Activated naive CD4-positive, alpha-beta T cell treated with anti-CD3 and anti-CD28 coated beads for 36 hours (primary cell): ENCODE measurements at regions of chr10 and their contacts with region 1.

Region 1: DNA sequence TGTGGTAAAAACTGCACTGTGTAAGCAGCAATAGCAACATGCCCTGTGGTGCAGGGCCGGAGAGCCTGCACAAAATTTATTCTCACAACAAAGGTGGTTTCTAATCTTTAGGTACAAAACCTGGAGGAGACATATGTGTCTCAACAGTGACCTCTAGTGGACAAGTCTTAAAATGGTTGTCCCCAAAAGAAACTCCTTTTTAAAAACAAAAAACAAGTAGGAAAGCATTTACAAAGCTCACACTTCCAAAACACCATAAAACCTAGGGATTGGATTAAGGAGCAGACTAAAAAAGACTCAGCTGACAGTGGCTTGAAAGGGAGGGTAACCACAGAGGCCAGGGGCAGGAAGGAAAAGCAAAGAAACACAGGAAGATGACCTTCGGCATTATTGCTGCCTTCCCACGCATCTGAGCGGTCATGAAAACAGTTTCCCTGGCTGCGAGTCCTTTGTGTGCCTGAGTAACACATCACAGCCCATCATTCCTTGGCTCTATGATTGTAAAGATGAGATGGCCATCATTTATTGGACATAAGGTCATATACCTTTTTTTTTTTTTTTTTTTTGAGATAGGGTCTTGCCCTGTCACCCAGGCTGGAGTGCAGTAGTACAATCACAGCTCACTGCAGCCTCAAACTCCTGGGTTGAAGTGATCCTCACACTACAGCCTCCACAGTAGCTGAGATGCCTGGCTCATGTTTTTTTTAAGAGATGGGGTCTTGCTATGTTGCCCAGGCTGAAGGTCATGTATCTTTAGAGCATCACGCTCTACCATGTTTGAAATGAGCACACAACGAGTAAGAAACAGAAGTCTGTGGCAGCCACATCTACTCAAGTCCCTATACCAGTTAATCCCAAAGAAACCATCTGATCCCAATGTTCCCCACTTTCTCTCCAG is 39.5 kb downstream of the RSU1 start:
- DNase-seq: no peak
- H3K4me3 Mint-ChIP-seq: no peak overlapping the region
- H3K27ac Mint-ChIP-seq: peak overlapping the region; percentile 72
- H3K4me1 Mint-ChIP-seq: peaks cover 36% of the 10 kb centered on the region
- H3K27me3 Mint-ChIP-seq: no peaks in the 10 kb centered on the region

Region 2: DNA sequence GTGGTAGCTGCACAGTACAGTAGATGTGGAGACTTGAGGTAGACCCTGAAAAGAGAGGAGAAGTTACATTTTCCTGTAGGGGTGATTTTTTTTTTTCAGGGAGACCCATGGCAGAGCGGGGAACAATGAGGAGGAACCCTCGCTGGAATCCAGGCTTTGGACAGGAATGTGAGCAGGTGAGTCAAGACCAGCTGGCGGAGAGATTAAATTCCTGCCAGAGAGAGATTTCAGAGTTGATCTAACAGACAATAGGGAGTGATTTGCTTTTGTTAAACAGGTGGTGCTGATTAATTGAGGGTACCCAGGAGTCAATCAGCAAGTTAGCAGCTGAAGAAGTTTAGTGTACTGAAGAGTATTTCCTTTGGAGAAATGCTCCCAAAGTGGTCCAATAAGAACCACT is 875.8 kb before region 1 on chr10:
- CTCF ChIA-PET with region 1: interaction called, 4 read pairs
- intact Hi-C with region 1: loop called (anchors 1 kb)
- DNase-seq: no peak
- H3K4me3 Mint-ChIP-seq: no peak overlapping the region
- H3K27ac Mint-ChIP-seq: no peak overlapping the region
- H3K4me1 Mint-ChIP-seq: no peaks in the 10 kb centered on the region
- H3K27me3 Mint-ChIP-seq: peaks cover 2% of the 10 kb centered on the region

Region 3: DNA sequence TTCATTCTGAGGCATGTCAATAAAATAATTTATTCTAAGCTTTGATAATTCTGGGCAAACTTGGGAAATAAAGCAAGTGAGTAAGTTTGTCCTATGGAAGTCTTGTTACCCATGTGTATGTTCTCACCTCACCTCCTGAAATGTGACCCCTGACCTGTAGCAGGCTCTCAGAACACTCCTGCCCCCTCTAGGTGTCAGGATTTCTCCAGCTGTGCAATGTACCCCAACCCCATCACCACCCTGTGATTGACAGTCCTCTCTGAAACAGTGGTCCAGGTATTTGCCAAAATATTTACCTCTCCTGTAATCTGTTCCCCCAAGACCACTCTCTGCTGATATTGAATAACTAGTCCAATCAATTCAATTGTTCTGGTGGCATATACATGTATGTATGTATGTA is 463.5 kb before region 1 on chr10:
- CTCF ChIA-PET with region 1: no interaction called
- intact Hi-C with region 1: loop called (anchors 10 kb)
- DNase-seq: peak; percentile 9
- H3K4me3 Mint-ChIP-seq: no peak overlapping the region
- H3K27ac Mint-ChIP-seq: no peak overlapping the region
- H3K4me1 Mint-ChIP-seq: no peaks in the 10 kb centered on the region
- H3K27me3 Mint-ChIP-seq: peaks cover 2% of the 10 kb centered on the region

Region 4: GRCh38 chr10:16545116-16545736 is 232.5 kb before region 1 on chr10:
- CTCF ChIA-PET with region 1: no interaction called
- intact Hi-C with region 1: loop called (anchors 1 kb)
- DNase-seq: peak; percentile 22
- H3K4me3 Mint-ChIP-seq: no peak overlapping the region
- H3K27ac Mint-ChIP-seq: no peak overlapping the region
- H3K4me1 Mint-ChIP-seq: no peaks in the 10 kb centered on the region
- H3K27me3 Mint-ChIP-seq: peaks cover 16% of the 10 kb centered on the region

Region 5: GRCh38 chr10:16742165-16742960 is 35.4 kb before region 1 on chr10:
- CTCF ChIA-PET with region 1: no interaction called
- intact Hi-C with region 1: no loop called
- DNase-seq: no peak
- H3K4me3 Mint-ChIP-seq: no peak overlapping the region
- H3K27ac Mint-ChIP-seq: no peak overlapping the region
- H3K4me1 Mint-ChIP-seq: no peaks in the 10 kb centered on the region
- H3K27me3 Mint-ChIP-seq: no peaks in the 10 kb centered on the region

Region 6: DNA sequence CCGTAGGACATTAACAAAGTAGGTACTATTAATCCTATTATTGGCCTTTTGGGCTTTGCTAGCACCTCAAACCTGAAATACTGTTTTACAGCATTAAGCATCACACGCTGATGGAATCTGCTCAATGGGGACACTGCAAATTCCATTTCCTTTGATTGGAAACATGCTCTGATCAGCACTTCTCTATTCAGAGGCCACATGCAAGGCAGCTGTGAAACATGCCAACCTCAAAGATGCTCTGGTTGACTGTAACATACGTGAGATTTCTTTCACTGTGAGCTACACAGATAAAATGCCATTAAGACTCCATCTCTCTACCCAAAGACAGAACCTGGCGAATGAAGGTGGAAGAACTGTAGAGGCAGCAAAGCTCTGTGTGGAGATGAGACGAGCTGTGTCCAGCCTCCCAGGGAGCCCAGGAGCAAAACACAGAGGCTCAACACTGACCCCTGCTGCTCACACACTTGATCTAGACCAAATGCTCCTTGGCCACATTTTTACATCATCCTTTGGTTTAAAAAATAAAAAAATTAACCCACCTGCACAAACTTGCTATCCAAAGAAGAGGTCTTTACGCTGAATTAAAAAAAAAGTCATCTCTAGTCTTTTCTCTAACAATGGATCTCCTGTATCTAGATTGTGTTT is 31.5 kb after region 1 on chr10:
- CTCF ChIA-PET with region 1: interaction called, 9 read pairs
- intact Hi-C with region 1: loop called (anchors 1 kb)
- DNase-seq: peak; percentile 83
- H3K4me3 Mint-ChIP-seq: no peak overlapping the region
- H3K27ac Mint-ChIP-seq: no peak overlapping the region
- H3K4me1 Mint-ChIP-seq: peaks cover 10% of the 10 kb centered on the region
- H3K27me3 Mint-ChIP-seq: no peaks in the 10 kb centered on the region

Region 7: DNA sequence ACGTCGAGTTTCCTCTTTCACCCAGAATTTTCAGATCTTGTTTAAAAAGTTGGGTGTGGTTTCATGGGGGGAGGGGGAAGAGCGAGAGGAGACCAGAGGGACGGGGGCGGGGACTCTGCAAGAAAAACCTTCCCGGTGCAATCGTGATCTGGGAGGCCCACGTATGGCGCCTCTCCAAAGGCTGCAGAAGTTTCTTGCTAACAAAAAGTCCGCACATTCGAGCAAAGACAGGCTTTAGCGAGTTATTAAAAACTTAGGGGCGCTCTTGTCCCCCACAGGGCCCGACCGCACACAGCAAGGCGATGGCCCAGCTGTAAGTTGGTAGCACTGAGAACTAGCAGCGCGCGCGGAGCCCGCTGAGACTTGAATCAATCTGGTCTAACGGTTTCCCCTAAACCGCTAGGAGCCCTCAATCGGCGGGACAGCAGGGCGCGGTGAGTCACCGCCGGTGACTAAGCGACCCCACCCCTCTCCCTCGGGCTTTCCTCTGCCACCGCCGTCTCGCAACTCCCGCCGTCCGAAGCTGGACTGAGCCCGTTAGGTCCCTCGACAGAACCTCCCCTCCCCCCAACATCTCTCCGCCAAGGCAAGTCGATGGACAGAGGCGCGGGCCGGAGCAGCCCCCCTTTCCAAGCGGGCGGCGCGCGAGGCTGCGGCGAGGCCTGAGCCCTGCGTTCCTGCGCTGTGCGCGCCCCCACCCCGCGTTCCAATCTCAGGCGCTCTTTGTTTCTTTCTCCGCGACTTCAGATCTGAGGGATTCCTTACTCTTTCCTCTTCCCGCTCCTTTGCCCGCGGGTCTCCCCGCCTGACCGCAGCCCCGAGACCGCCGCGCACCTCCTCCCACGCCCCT is 450.6 kb after region 1 on chr10 and contains the start of gene VIM:
- CTCF ChIA-PET with region 1: no interaction called
- intact Hi-C with region 1: loop called (anchors 2 kb)
- DNase-seq: peak; percentile 90
- H3K4me3 Mint-ChIP-seq: peak within 1 kb of the TSS; percentile 80
- H3K27ac Mint-ChIP-seq: peak within 1 kb of the TSS; percentile 73
- H3K4me1 Mint-ChIP-seq: peaks cover 45% of the 10 kb centered on the region
- H3K27me3 Mint-ChIP-seq: peaks cover 2% of the 10 kb centered on the region
- total RNA-seq, gene VIM: 58.3 to 60.6 TPM